ENCODE measurements at regions of chr4 and their contacts with region 1.

Region 1: GRCh38 chr4:74376888-74377483 is 12.0 kb downstream of the EREG start:
- DNase-seq: peak; percentile 41 to 67
- ATAC-seq: 0 out of 6 replicates have a peak, but pooled peaks of 1 of the 2 experiments have one; percentile 10
- H3K4me3 ChIP-seq: peak overlapping the region; percentile 15; the same call in 2 of the 3 replicates
- H3K27ac ChIP-seq: peak overlapping the region; percentile 79 to 87
- H3K4me1 ChIP-seq: peaks cover 69% of the 10 kb centered on the region
- CTCF ChIP-seq: peak; percentile 70
- EP300 ChIP-seq: no peak
- POLR2A ChIP-seq: no peak
- RAD21 ChIP-seq: peak; percentile 75 to 80

Region 2: DNA sequence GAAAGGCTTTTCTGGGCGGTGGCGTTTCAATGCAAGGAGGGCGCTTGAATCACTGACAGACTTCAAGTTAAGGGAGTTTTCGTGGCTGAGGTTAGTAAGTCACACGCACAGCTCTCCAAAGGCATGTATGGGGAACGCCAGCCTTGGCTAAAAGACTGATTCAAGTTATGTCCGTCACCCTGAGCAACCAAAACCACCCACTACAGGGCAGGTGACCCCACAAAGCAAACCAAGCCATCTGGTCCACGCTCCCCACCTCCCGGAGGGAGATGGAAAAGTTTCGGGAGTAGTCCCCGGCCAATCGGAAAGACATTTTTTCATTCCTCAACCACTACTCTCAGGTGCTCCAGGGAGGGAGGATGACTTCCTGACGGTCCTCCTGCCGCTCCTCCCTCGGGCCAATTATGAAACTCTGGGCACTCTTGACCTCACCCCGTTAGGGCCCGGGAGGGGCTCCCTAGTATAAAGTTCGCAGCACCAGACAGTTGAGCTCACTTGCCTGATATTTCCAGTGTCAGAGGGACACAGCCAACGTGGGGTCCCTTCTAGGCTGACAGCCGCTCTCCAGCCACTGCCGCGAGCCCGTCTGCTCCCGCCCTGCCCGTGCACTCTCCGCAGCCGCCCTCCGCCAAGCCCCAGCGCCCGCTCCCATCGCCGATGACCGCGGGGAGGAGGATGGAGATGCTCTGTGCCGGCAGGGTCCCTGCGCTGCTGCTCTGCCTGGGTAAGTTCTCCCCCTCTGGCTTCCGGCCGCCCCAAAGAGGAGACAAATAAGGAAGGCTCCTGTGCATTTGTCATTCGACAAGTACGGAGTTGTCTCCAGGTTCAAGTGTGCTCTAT is 12.1 kb before region 1 on chr4 and contains the start of gene EREG:
- CTCF ChIA-PET with region 1: interaction called, 3 read pairs
- POLR2A ChIA-PET with region 1: interaction called, 13 read pairs
- DNase-seq: peak; percentile 33 to 88
- ATAC-seq: peak; percentile 83 to 86
- H3K4me3 ChIP-seq: peak within 1 kb of the TSS; percentile 69
- H3K27ac ChIP-seq: peak within 1 kb of the TSS; percentile 76 to 90
- H3K4me1 ChIP-seq: peaks cover 38% of the 10 kb centered on the region
- CTCF ChIP-seq: no peak
- EP300 ChIP-seq: no peak
- POLR2A ChIP-seq: peak; percentile 90
- RAD21 ChIP-seq: no peak
- polyA plus RNA-seq, gene EREG: 71.1 and 102 TPM in 2 replicates

Region 3: DNA sequence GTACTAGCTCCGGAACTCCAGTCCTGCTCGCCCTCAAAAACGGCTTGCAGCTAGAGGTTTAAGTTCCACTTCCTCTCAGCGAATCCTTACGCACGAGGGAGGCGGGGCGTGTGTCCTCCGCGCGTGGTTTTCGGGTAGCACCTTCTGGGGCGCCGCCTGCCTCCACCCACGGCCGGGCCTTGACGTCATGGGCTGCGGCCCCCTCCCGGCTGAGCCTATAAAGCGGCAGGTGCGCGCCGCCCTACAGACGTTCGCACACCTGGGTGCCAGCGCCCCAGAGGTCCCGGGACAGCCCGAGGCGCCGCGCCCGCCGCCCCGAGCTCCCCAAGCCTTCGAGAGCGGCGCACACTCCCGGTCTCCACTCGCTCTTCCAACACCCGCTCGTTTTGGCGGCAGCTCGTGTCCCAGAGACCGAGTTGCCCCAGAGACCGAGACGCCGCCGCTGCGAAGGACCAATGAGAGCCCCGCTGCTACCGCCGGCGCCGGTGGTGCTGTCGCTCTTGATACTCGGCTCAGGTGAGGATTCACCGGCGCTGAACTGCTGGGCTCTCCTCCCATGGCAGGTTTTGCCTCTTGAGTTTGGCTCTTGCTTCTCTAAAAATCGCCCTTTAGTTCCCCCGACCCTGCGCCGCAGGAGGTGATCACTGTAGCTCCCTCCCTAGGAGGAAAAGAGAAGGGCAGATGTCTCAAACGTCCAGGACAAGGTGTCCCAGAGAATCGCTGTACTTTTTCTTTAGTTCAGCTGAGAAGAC is 68.1 kb after region 1 on chr4 and contains the start of gene AREG:
- CTCF ChIA-PET with region 1: interaction called, 22 read pairs
- POLR2A ChIA-PET with region 1: interaction called, 6 read pairs
- DNase-seq: peak; percentile 60 to 88
- ATAC-seq: peak; percentile 83 to 89
- H3K4me3 ChIP-seq: peak within 1 kb of the TSS; percentile 86
- H3K27ac ChIP-seq: peak within 1 kb of the TSS; percentile 87 to 93
- H3K4me1 ChIP-seq: peaks cover 13% of the 10 kb centered on the region
- CTCF ChIP-seq: peak; percentile 49; the same call in 2 of the 3 replicates
- EP300 ChIP-seq: no peak
- POLR2A ChIP-seq: peak; percentile 57
- RAD21 ChIP-seq: peak in 1 of 2 experiments; percentile 33; a peak in 3 of 5 replicates
- polyA plus RNA-seq, gene AREG: 109 and 187 TPM in 2 replicates

Region 4: DNA sequence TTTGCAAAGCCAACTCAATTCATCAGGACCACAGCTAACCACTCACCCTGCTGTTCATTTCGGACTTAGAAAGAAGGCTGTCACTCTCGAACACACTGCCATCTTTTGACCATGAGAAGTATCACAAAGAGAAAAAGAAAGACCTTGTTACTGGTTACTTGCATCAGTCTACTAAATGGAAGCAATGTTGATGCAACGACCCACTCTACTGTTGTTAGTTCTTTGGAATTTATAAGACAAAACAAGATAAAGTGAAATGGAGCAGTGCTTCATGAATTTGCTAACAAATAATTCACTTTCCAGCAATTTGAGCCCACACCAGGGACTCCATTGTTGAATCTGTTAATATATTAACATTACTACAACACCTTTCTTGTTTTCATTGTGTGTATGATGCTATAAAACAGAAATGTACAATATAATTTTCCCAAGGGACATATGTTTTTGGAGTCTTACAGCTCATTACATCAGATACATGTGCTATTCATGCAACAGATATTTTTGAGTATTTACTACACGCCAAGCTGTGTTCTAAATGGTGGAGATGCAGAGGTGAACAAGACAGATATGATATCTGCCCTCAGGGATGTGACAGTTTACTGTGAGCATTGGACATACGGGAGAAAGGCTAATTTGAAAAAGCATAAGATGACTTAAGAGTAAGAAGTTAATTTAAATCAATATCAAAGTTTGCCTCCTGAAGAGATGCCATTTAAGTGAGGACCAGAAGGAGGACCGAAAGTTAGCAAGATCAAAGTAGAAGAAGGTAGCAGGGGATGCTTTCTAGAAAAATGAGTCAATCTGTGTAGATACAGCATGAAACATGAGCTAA is 155.2 kb after region 1 on chr4:
- CTCF ChIA-PET with region 1: interaction called, 32 read pairs
- POLR2A ChIA-PET with region 1: no interaction called
- DNase-seq: peak; percentile 35 to 90
- ATAC-seq: peak; percentile 93 to 97
- H3K4me3 ChIP-seq: no peak overlapping the region
- H3K27ac ChIP-seq: peak overlapping the region; percentile 77 to 85
- H3K4me1 ChIP-seq: peaks cover 48% of the 10 kb centered on the region
- CTCF ChIP-seq: peak; percentile 63
- EP300 ChIP-seq: no peak
- POLR2A ChIP-seq: no peak
- RAD21 ChIP-seq: peak; percentile 77 to 79

Region 5: GRCh38 chr4:74623041-74623440 is 246.1 kb after region 1 on chr4:
- CTCF ChIA-PET with region 1: interaction called, 29 read pairs
- POLR2A ChIA-PET with region 1: no interaction called
- DNase-seq: peak; percentile 33 to 88
- ATAC-seq: peak; percentile 45 to 49; a peak in 3 of 6 replicates
- H3K4me3 ChIP-seq: no peak overlapping the region
- H3K27ac ChIP-seq: peak overlapping the region; percentile 89 to 96
- H3K4me1 ChIP-seq: peaks cover 94% of the 10 kb centered on the region
- CTCF ChIP-seq: peak; percentile 72
- EP300 ChIP-seq: no peak
- POLR2A ChIP-seq: no peak
- RAD21 ChIP-seq: peak; percentile 89 to 90

Region 6: GRCh38 chr4:74659576-74660411 is 282.8 kb after region 1 on chr4:
- CTCF ChIA-PET with region 1: interaction called, 4 read pairs
- POLR2A ChIA-PET with region 1: interaction called, 10 read pairs
- DNase-seq: peak; percentile 54 to 99
- ATAC-seq: peak; percentile 85 to 92
- H3K4me3 ChIP-seq: no peak overlapping the region
- H3K27ac ChIP-seq: peak overlapping the region; percentile 99 to 100
- H3K4me1 ChIP-seq: peaks cover 64% of the 10 kb centered on the region
- CTCF ChIP-seq: no peak
- EP300 ChIP-seq: peak; percentile 96 to 98; a peak in 4 of 5 replicates
- POLR2A ChIP-seq: no peak
- RAD21 ChIP-seq: peak in 1 of 2 experiments; percentile 10; a peak in 3 of 5 replicates

Region 7: GRCh38 chr4:74675673-74676279 is 298.8 kb after region 1 on chr4:
- CTCF ChIA-PET with region 1: interaction called, 63 read pairs
- POLR2A ChIA-PET with region 1: no interaction called
- DNase-seq: peak; percentile 18 to 80
- ATAC-seq: peak; percentile 78 to 90
- H3K4me3 ChIP-seq: no peak overlapping the region
- H3K27ac ChIP-seq: peak overlapping the region; percentile 32 to 71; a peak in 5 of 6 replicates
- H3K4me1 ChIP-seq: peaks cover 8% of the 10 kb centered on the region; the same call in 2 of the 3 replicates
- CTCF ChIP-seq: peak; percentile 82
- EP300 ChIP-seq: no peak
- POLR2A ChIP-seq: no peak
- RAD21 ChIP-seq: peak; percentile 85 to 94

Measured in A549 (cell line).